HEK293T (cell line): ENCODE measurements at regions of chr1 and their contacts with region 1.

Region 1: DNA sequence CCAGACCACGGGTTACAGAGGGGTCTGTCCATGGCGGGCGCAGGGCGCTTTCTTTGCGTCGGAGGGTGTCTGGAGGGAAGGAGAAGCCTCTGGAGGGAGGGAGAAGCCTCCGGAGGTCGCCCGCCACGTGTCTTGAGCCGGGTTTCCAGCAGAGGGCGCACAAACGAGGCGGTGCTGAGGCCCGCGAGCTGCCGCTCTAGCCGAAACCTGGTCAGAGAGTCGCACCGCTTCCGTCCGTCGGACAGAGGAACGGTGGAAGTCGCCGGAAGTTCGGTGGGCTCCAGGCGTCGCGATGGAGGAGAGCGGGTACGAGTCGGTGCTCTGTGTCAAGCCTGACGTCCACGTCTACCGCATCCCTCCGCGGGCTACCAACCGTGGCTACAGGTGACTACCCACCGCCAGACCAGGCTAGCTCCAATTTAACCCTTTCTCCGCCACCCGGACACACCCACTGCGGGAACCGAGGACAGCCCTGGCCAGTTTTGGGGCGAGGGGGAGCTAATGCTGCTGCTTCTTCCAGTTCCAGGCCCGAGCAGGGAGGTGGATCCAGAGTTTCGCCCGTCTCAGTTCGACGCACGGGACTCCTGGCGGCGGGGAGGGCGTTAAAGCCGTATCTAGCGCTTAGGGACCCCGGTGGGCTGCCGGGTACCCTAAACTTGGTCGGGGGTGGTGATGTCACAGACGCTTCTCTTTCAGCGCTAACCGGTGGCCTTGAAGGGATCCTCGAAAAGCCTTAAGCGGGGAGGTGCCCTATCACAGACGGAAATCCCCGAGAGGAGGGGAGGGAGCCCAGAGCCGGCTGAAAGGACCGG is at the start of gene NECAP2:
- DNase-seq: peak; percentile 95

Region 2: GRCh38 chr1:16425125-16426025 is 15.3 kb before region 1 on chr1:
- CTCF ChIA-PET with region 1: no interaction called
- POLR2A ChIA-PET with region 1: interaction called, 15 read pairs
- DNase-seq: no peak

Region 3: DNA sequence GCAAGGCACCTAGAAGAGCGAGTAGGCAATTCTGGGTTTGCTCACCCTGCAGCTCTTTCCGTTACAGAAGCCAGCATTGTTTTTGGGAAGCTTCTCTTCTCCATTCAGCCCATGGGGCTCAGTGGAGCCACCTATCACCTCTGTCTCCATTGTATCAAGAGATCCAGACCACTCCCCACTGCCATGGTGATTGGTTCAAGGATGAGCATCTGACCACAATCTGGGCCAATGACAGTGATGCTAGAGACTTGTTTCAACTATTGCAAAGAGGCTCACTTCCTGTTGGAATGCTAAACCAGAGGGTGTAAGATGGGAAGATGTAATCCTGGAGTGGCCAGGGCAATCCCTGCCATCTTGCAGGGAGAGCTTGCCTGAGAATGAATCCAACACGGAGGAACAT is 10.1 kb before region 1 on chr1:
- CTCF ChIA-PET with region 1: interaction called, 3 read pairs
- POLR2A ChIA-PET with region 1: interaction called, 15 read pairs
- DNase-seq: peak; percentile 31

Region 4: DNA sequence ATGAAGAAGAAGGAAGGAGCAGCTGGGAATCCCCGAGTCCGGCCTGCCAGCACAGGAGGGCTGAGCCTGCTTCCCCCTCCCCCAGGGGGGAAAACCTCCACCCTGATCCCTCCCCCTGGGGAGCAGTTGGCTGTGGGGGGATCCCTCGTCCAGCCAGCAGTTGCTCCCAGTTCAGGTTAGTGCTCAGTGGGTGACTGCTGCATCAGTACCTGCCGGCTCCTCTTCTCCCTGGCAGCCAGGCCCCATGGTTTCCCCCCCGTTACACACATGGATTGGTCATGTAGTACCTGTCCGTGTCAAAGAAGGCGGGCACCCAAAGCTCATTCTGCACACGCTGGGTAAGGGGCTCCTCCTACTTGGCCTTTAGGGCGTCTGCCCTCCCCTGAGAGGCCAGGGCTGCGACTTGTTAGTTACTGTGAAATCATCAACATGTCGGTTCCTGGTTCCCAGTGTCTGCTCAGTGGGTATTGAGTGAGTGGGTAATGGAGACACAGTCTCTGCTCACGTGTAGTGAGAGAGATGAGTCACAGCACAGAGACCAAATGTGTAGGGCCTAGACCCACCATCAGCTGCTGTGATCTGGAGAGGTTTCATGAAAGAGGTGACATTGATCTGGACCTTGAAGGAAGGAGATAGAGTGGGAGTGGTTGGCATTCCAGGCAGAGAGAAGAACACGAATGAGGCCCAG is 11.3 kb after region 1 on chr1:
- CTCF ChIA-PET with region 1: no interaction called
- POLR2A ChIA-PET with region 1: interaction called, 10 read pairs
- DNase-seq: no peak